ENCODE measurements at regions of chr10 and their contacts with region 1.

Region 1: DNA sequence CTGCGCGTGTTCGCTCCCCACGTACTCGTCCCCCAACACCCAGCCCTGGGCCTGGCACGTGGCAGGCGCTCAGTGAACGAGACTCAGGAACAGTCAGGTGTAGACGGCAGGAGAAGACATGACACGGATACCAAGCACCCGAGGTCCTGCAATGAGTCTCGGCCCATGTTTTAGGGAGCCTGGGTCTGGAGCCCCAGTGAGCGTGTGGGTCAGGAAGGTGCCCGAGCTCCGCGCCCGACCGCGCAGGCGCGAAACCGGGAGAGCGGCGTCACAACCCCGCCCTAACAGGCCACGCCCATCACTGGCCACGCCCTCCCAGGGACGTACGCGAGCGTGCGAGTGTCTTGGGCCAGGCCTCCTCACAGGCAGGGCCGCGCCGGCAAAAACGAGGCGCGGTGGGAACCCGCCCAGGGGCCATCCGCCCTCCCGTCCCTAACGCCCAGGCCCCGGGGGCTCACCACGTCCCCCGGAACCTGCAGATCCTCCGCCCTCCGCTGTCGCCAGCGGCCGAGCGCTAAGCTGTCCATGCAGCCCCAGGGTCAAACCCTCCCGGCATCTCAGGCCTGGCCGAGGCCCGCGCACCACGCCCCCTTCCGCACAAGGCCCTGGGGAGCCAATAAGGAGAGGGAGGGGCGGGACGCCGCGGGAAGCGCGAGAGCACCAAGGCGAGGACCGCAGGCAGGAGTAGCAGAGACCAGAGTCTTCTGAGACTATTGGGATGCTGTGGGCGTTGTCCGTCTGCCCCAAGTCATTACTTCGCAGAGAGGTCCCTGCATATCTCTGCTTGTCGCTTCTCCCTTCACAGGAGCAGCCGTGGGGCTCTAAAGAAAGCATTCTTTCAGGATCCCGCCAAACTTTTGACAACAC is at the start of gene C10orf143:
- DNase-seq: peak; percentile 93 to 99 (median 97)
- ATAC-seq: peak; percentile 80 to 85 (median 82)
- H3K4me3 ChIP-seq: peak within 1 kb of the TSS; percentile 74 to 94
- H3K4me3 Mint-ChIP-seq: peak within 1 kb of the TSS; percentile 92 to 97 (median 95)
- H3K27ac ChIP-seq: peak within 1 kb of the TSS; percentile 91
- H3K27ac Mint-ChIP-seq: peak within 1 kb of the TSS; percentile 99
- H3K4me1 ChIP-seq: peaks cover 14 to 33% of the 10 kb centered on the region in 2 experiments
- H3K4me1 Mint-ChIP-seq: peaks cover 56% of the 10 kb centered on the region in 3 donors
- H3K27me3 ChIP-seq: no peaks in the 10 kb centered on the region
- H3K27me3 Mint-ChIP-seq: no peaks in the 10 kb centered on the region
- total RNA-seq, gene C10orf143: 7.6 to 14.6 (median 12.3) TPM

Region 2: DNA sequence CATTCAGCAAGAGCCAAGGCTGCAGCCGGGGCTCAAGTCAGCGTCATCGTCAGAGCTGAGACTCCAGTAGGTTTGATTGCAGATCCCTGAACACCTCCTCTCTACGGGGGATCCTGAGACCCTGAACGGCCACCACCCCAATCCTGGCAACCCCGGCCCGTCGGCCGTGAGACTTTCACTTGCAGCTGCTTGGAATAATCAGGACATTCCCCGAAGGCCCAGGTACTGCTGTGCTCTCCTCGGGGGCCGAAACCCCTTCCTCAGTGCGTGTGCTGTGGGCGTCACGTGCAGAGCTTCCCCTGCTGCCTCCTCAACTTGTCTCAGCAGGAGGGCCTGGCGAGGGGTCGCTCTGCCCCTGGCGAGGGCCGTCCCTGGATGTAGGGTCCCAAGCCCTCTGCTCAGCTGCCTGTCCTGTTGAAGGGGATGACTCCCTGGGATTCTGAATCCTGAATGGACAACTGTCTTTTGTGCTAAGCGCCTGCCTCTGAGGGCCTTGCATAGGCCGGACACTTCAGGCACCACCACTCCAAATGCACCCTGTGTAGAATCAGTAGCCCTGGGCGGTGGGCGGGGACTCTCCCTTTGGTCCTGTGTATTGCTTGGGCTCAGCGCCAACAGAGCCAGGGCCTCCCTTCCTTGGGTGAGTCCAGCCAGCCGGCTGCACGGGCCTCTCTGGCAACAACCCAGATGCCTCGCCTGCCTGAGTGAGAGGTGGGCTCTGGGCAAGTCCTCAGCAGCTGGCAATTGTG is 82.6 kb before region 1 on chr10:
- CTCF ChIA-PET with region 1: no interaction called
- POLR2A ChIA-PET with region 1: no interaction called
- DNase-seq: peak in 1 of 35 experiments; percentile 20
- ATAC-seq: no peak
- H3K4me3 ChIP-seq: no peak overlapping the region
- H3K4me3 Mint-ChIP-seq: no peak overlapping the region
- H3K27ac ChIP-seq: no peak overlapping the region
- H3K27ac Mint-ChIP-seq: no peak overlapping the region
- H3K4me1 ChIP-seq: no peaks in the 10 kb centered on the region
- H3K4me1 Mint-ChIP-seq: no peaks in the 10 kb centered on the region
- H3K27me3 ChIP-seq: peaks cover 0 to 12% of the 10 kb centered on the region in 2 experiments
- H3K27me3 Mint-ChIP-seq: peaks cover 0 to 3% of the 10 kb centered on the region in 2 donors

Region 3: GRCh38 chr10:130127364-130128061 is 17.0 kb after region 1 on chr10:
- CTCF ChIA-PET with region 1: interaction called, 8 to 23 read pairs
- POLR2A ChIA-PET with region 1: interaction called in 1 of 2 experiments, 3 read pairs
- DNase-seq: peak in 32 of 35 experiments; percentile 11 to 77 (median 35)
- ATAC-seq: peak; percentile 84 to 98 (median 92)
- H3K4me3 ChIP-seq: no peak overlapping the region
- H3K4me3 Mint-ChIP-seq: no peak overlapping the region
- H3K27ac ChIP-seq: no peak overlapping the region
- H3K27ac Mint-ChIP-seq: no peak overlapping the region
- H3K4me1 ChIP-seq: peaks cover 0 to 5% of the 10 kb centered on the region in 2 experiments
- H3K4me1 Mint-ChIP-seq: peaks cover 6 to 8% (median 7%) of the 10 kb centered on the region in 3 donors
- H3K27me3 ChIP-seq: peaks cover 0 to 32% of the 10 kb centered on the region in 2 experiments
- H3K27me3 Mint-ChIP-seq: peaks cover 19 to 33% of the 10 kb centered on the region in 2 donors

Region 4: GRCh38 chr10:130136226-130137089 is 26.0 kb after region 1 on chr10 and contains the start of gene GLRX3:
- CTCF ChIA-PET with region 1: interaction called, 3 to 32 read pairs
- POLR2A ChIA-PET with region 1: interaction called, 3 to 21 read pairs
- DNase-seq: peak; percentile 71 to 94 (median 83)
- ATAC-seq: peak; percentile 90 to 94 (median 94)
- H3K4me3 ChIP-seq: peak within 1 kb of the TSS; percentile 72 to 85
- H3K4me3 Mint-ChIP-seq: peak within 1 kb of the TSS; percentile 85 to 91 (median 90)
- H3K27ac ChIP-seq: peak within 1 kb of the TSS; percentile 73
- H3K27ac Mint-ChIP-seq: peak within 1 kb of the TSS; percentile 81 to 87
- H3K4me1 ChIP-seq: peaks cover 13 to 42% of the 10 kb centered on the region in 2 experiments
- H3K4me1 Mint-ChIP-seq: peaks cover 33 to 48% (median 47%) of the 10 kb centered on the region in 3 donors
- H3K27me3 ChIP-seq: peaks cover 0 to 15% of the 10 kb centered on the region in 2 experiments
- H3K27me3 Mint-ChIP-seq: peaks cover 8 to 12% of the 10 kb centered on the region in 2 donors
- total RNA-seq, gene GLRX3: 32.4 to 40.7 (median 35.4) TPM

Region 5: GRCh38 chr10:130179640-130180039 is 69.2 kb after region 1 on chr10:
- CTCF ChIA-PET with region 1: interaction called in 1 of 2 experiments, 11 read pairs
- POLR2A ChIA-PET with region 1: no interaction called
- DNase-seq: peak in 27 of 35 experiments; percentile 15 to 65 (median 28)
- ATAC-seq: peak; percentile 72 to 93 (median 82)
- H3K4me3 ChIP-seq: no peak overlapping the region
- H3K4me3 Mint-ChIP-seq: no peak overlapping the region
- H3K27ac ChIP-seq: no peak overlapping the region
- H3K27ac Mint-ChIP-seq: no peak overlapping the region
- H3K4me1 ChIP-seq: no peaks in the 10 kb centered on the region
- H3K4me1 Mint-ChIP-seq: peaks cover 0 to 18% (median 17%) of the 10 kb centered on the region in 3 donors
- H3K27me3 ChIP-seq: no peaks in the 10 kb centered on the region
- H3K27me3 Mint-ChIP-seq: no peaks in the 10 kb centered on the region